ENCODE measurements at regions of chr9 and their contacts with region 1.

Region 1: GRCh38 chr9:125241000-125241862 is at the start of gene HSPA5:
- DNase-seq: peak; percentile 95 to 100 (median 99)
- ATAC-seq: peak; percentile 89 to 91
- H3K4me3 Mint-ChIP-seq: peak within 1 kb of the TSS; percentile 93 to 99 (median 98)
- H3K27ac Mint-ChIP-seq: peak within 1 kb of the TSS; percentile 97 to 100 (median 100)
- H3K4me1 Mint-ChIP-seq: peaks cover 27 to 59% (median 48%) of the 10 kb centered on the region in 4 donors
- H3K27me3 Mint-ChIP-seq: peaks cover 0 to 3% (median 0%) of the 10 kb centered on the region in 5 donors
- polyA plus RNA-seq, gene HSPA5: 130 to 162 (median 143) TPM

Region 2: GRCh38 chr9:124771021-124771866 is 470.0 kb before region 1 on chr9 and contains the start of gene NR6A1:
- POLR2A ChIA-PET with region 1: no interaction called
- DNase-seq: peak; percentile 84 to 95 (median 90)
- ATAC-seq: peak; percentile 88 to 91
- H3K4me3 Mint-ChIP-seq: peak within 1 kb of the TSS; percentile 84 to 94 (median 91)
- H3K27ac Mint-ChIP-seq: peak within 1 kb of the TSS; percentile 40 to 88 (median 76)
- H3K4me1 Mint-ChIP-seq: peaks cover 23 to 46% (median 39%) of the 10 kb centered on the region in 4 donors
- H3K27me3 Mint-ChIP-seq: peaks cover 57 to 87% (median 62%) of the 10 kb centered on the region in 5 donors
- polyA plus RNA-seq, gene NR6A1: not detected

Region 3: GRCh38 chr9:124940693-124941453 is 300.4 kb before region 1 on chr9 and contains the start of gene GOLGA1:
- POLR2A ChIA-PET with region 1: interaction called, 10 read pairs
- DNase-seq: peak; percentile 89 to 97 (median 94)
- ATAC-seq: peak; percentile 83 to 86
- H3K4me3 Mint-ChIP-seq: peak within 1 kb of the TSS; percentile 91 to 98 (median 96)
- H3K27ac Mint-ChIP-seq: peak within 1 kb of the TSS; percentile 94 to 99 (median 98)
- H3K4me1 Mint-ChIP-seq: peaks cover 13 to 37% (median 31%) of the 10 kb centered on the region in 4 donors
- H3K27me3 Mint-ChIP-seq: no peaks in the 10 kb centered on the region
- polyA plus RNA-seq, gene GOLGA1: 2.4 to 6.8 (median 6.8) TPM

Region 4: GRCh38 chr9:125189361-125190289 is 51.6 kb before region 1 on chr9 and contains the start of gene PPP6C:
- POLR2A ChIA-PET with region 1: interaction called, 133 read pairs
- DNase-seq: peak; percentile 93 to 98 (median 96)
- ATAC-seq: peak; percentile 92
- H3K4me3 Mint-ChIP-seq: peak within 1 kb of the TSS; percentile 92 to 98 (median 96)
- H3K27ac Mint-ChIP-seq: peak within 1 kb of the TSS; percentile 89 to 97 (median 96)
- H3K4me1 Mint-ChIP-seq: peaks cover 20 to 79% (median 66%) of the 10 kb centered on the region in 4 donors
- H3K27me3 Mint-ChIP-seq: no peaks in the 10 kb centered on the region
- polyA plus RNA-seq, gene PPP6C: 47.2 to 55.9 (median 51.6) TPM

Region 5: DNA sequence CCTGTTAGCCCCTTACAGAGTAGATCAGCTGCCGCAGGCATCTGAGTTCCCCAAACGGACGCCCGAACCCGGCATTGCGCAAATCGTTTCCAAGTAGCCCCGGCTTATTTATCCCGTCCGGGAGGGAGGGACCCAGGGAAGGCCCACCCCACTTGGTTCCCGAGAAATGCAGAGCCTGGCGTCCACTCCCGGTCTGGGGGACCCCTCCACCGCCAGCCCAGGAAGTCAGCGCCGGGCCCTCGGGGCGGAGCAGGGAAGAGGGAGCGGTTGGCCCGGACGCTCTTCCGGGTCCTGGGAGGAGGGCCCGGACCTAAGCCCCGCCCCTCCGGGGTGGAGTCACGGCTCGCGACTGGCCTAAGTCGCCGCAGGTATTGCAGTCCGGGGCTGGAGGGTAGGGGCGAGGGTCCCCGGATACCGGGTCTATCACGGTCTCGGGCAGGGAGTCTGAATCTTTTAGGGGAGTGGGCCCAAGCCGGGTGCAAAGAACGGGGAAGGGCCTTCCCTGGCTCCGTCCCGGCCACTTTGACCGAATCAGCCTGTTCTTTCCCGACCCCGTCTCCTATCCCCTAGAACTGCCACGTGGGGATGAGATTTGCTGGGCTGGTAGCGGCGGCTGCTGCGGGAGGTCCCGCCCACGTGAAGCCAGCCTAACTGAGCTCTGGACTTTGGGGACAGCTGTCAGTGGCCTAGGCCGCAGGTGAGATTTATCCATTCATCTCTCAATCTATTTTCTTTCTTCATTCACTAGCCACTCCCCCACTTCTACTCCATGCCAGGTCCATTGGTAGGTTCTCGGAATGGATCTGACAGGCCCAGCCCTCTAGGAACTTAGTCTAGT is 40.8 kb before region 1 on chr9 and contains the start of gene RABEPK:
- POLR2A ChIA-PET with region 1: interaction called, 133 read pairs
- DNase-seq: peak; percentile 69 to 91 (median 86)
- ATAC-seq: peak; percentile 93 to 95
- H3K4me3 Mint-ChIP-seq: peak within 1 kb of the TSS; percentile 88 to 97 (median 93)
- H3K27ac Mint-ChIP-seq: peak within 1 kb of the TSS; percentile 86 to 97 (median 94)
- H3K4me1 Mint-ChIP-seq: peaks cover 26 to 62% (median 50%) of the 10 kb centered on the region in 4 donors
- H3K27me3 Mint-ChIP-seq: no peaks in the 10 kb centered on the region
- polyA plus RNA-seq, gene RABEPK: 29.4 to 44.2 (median 32.7) TPM

Region 6: GRCh38 chr9:125255781-125256391 is 14.7 kb after region 1 on chr9:
- POLR2A ChIA-PET with region 1: interaction called, 58 read pairs
- DNase-seq: no peak
- ATAC-seq: peak in 1 of 2 donors; percentile 47
- H3K4me3 Mint-ChIP-seq: no peak overlapping the region
- H3K27ac Mint-ChIP-seq: no peak overlapping the region
- H3K4me1 Mint-ChIP-seq: peaks cover 2 to 15% (median 4%) of the 10 kb centered on the region in 4 donors
- H3K27me3 Mint-ChIP-seq: peaks cover 0 to 2% (median 0%) of the 10 kb centered on the region in 5 donors

Region 7: GRCh38 chr9:125261501-125262293 is 20.5 kb after region 1 on chr9 and contains the start of gene GAPVD1:
- POLR2A ChIA-PET with region 1: interaction called, 58 read pairs
- DNase-seq: peak; percentile 77 to 92 (median 88)
- ATAC-seq: peak; percentile 89 to 94
- H3K4me3 Mint-ChIP-seq: peak within 1 kb of the TSS; percentile 91 to 99 (median 98)
- H3K27ac Mint-ChIP-seq: peak within 1 kb of the TSS; percentile 88 to 100 (median 97)
- H3K4me1 Mint-ChIP-seq: peaks cover 23 to 59% (median 42%) of the 10 kb centered on the region in 4 donors
- H3K27me3 Mint-ChIP-seq: peaks cover 0 to 2% (median 0%) of the 10 kb centered on the region in 5 donors
- polyA plus RNA-seq, gene GAPVD1: 43.7 to 50.7 (median 48.5) TPM

Region 8: GRCh38 chr9:125280945-125281344 is 39.7 kb after region 1 on chr9:
- POLR2A ChIA-PET with region 1: no interaction called
- DNase-seq: no peak
- ATAC-seq: no peak
- H3K4me3 Mint-ChIP-seq: no peak overlapping the region
- H3K27ac Mint-ChIP-seq: no peak overlapping the region
- H3K4me1 Mint-ChIP-seq: peaks cover 5 to 36% (median 14%) of the 10 kb centered on the region in 4 donors
- H3K27me3 Mint-ChIP-seq: no peaks in the 10 kb centered on the region

Measured in naive thymus-derived CD8-positive, alpha-beta T cell (primary cell).